Caco-2 (cell line): ENCODE measurements at regions of chr14 and their contacts with region 1.

Region 1: GRCh38 chr14:61561657-61562276 is 133.5 kb upstream of the HIF1A start:
- DNase-seq: peak; percentile 62 to 76
- H3K4me3 ChIP-seq: no peak overlapping the region
- H3K4me3 Mint-ChIP-seq: peak overlapping the region; percentile 28
- H3K27ac Mint-ChIP-seq: peak overlapping the region; percentile 94
- H3K4me1 ChIP-seq: peaks cover 56% of the 10 kb centered on the region
- H3K4me1 Mint-ChIP-seq: peaks cover 33% of the 10 kb centered on the region
- H3K27me3 ChIP-seq: no peaks in the 10 kb centered on the region
- H3K27me3 Mint-ChIP-seq: no peaks in the 10 kb centered on the region
- CTCF ChIP-seq: no peak

Region 2: GRCh38 chr14:61461808-61462275 is 99.9 kb before region 1 on chr14:
- CTCF ChIA-PET with region 1: interaction called, 4 read pairs
- POLR2A ChIA-PET with region 1: no interaction called
- intact Hi-C with region 1: loop called (anchors 5 kb)
- DNase-seq: peak in 1 of 2 experiments; percentile 63
- H3K4me3 ChIP-seq: no peak overlapping the region
- H3K4me3 Mint-ChIP-seq: no peak overlapping the region
- H3K27ac Mint-ChIP-seq: no peak overlapping the region
- H3K4me1 ChIP-seq: no peaks in the 10 kb centered on the region
- H3K4me1 Mint-ChIP-seq: no peaks in the 10 kb centered on the region
- H3K27me3 ChIP-seq: no peaks in the 10 kb centered on the region
- H3K27me3 Mint-ChIP-seq: no peaks in the 10 kb centered on the region
- CTCF ChIP-seq: peak; percentile 50 to 68

Region 3: DNA sequence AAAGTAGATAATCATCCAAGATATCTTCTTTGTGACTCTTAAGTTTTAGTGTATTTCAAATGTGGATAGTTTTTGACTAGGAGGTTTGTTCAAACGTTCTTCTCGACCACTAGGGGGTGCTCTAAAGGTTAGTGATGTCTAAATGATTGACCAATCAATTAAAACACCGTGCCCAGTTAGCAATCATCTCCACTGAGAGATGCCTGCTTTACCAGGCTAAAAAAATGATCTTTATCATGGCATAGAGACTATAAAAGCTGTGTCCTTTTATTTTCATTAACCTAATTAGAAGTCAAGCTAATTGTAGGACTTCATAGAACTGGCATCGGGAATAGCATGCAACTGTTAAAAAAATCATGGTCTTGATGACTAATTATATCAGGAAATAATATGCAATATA is 86.5 kb before region 1 on chr14:
- CTCF ChIA-PET with region 1: interaction called, 3 read pairs
- POLR2A ChIA-PET with region 1: no interaction called
- intact Hi-C with region 1: loop called (anchors 2 kb)
- DNase-seq: peak in 1 of 2 experiments; percentile 60
- H3K4me3 ChIP-seq: no peak overlapping the region
- H3K4me3 Mint-ChIP-seq: no peak overlapping the region
- H3K27ac Mint-ChIP-seq: no peak overlapping the region
- H3K4me1 ChIP-seq: no peaks in the 10 kb centered on the region
- H3K4me1 Mint-ChIP-seq: peaks cover 6% of the 10 kb centered on the region
- H3K27me3 ChIP-seq: no peaks in the 10 kb centered on the region
- H3K27me3 Mint-ChIP-seq: no peaks in the 10 kb centered on the region
- CTCF ChIP-seq: peak; percentile 61 to 77

Region 4: DNA sequence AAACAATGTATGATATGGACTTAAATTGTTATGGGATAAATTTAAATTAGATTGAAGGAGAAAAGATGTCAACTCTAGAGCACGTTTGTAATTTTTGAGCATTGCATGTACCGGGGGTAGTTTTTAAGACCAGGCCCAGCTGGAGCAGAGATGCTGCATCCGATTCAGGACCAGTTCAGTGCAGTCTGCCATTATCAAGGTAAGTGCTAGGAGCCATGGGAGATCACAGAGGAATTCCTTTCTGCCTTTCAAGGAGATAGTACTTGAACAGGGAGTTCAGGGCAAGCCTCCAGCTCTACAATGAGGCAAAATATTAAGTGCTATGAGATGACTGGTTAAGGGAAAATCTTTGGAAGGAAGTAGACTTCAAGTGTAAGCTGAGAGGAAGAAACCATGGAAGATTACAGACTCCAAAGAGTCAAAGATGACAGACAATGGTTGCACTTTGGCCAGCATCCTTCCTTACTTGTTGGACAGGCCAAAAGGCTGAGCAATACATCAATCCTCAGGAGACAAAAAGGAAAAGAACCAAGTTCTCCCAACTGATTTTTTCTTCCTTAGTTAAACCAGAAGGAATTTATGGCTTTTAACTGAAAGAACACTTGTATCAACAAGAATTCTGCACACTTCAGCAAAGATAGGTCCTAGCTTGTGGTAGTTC is 20.3 kb after region 1 on chr14:
- CTCF ChIA-PET with region 1: interaction called, 14 read pairs
- POLR2A ChIA-PET with region 1: interaction called, 8 read pairs
- intact Hi-C with region 1: loop called (anchors 1 kb)
- DNase-seq: no peak
- H3K4me3 ChIP-seq: no peak overlapping the region
- H3K4me3 Mint-ChIP-seq: peak overlapping the region; percentile 36
- H3K27ac Mint-ChIP-seq: peak overlapping the region; percentile 48
- H3K4me1 ChIP-seq: peaks cover 26% of the 10 kb centered on the region
- H3K4me1 Mint-ChIP-seq: peaks cover 25% of the 10 kb centered on the region
- H3K27me3 ChIP-seq: no peaks in the 10 kb centered on the region
- H3K27me3 Mint-ChIP-seq: no peaks in the 10 kb centered on the region
- CTCF ChIP-seq: no peak

Region 5: DNA sequence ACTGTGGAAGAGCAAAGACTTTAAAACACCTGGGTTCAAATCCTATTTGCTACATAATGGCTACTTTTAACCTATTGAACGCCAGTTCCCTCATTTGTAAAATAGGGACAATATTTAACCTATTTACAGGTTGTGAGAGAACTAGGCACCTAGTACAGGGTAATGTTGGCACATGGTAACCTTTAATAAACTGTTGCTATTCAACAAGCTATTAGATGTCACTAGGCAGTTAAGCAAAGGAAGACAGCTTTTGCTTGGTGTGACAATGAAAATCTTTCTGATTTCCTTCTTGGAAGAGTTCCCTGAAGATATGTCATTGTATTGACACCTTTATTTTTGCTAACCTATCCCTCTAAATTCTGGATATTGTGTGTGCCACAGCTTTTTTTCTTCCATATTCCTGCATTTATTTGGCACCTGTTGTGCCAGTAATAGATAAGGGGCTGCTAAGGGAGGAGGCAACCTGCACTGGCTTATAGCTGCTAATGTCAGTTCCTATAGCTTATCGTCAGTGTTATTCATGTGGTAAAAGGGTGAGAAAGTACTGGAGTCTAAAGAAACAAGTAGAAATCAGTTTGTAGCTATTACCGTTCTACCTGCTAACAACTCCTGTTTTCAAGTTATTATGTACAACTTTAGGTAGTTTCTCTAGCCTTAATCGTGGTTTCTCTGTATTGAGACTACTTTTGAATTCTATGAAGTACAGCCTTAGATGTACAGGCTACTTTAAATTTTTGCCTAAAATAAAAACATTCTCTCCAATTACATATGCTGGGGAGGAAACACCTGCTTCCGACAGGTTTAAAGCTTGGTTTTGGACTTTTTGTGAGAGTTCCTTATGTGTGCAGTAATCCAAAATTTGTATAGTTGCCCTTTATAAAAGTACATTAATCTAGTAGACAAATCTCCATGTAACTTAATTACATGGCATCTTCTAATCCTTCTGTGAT is 157.9 kb after region 1 on chr14:
- CTCF ChIA-PET with region 1: no interaction called
- POLR2A ChIA-PET with region 1: interaction called, 3 read pairs
- intact Hi-C with region 1: loop called (anchors 5 kb)
- DNase-seq: no peak
- H3K4me3 ChIP-seq: no peak overlapping the region
- H3K4me3 Mint-ChIP-seq: no peak overlapping the region
- H3K27ac Mint-ChIP-seq: no peak overlapping the region
- H3K4me1 ChIP-seq: peaks cover 10% of the 10 kb centered on the region; the same call in 1 of the 2 replicates
- H3K4me1 Mint-ChIP-seq: peaks cover 11% of the 10 kb centered on the region
- H3K27me3 ChIP-seq: no peaks in the 10 kb centered on the region
- H3K27me3 Mint-ChIP-seq: no peaks in the 10 kb centered on the region
- CTCF ChIP-seq: no peak